Endothelial cell of umbilical vein (primary cell): ENCODE measurements at regions of chr21 and their contacts with region 1.

Region 1: GRCh38 chr21:32604464-32604863 is 7.7 kb downstream of the CFAP298 start:
- DNase-seq: no peak
- H3K4me3 ChIP-seq: no peak overlapping the region
- H3K27ac ChIP-seq: no peak overlapping the region
- H3K4me1 ChIP-seq: no peaks in the 10 kb centered on the region
- H3K27me3 ChIP-seq: no peaks in the 10 kb centered on the region
- CTCF ChIP-seq: no peak
- POLR2A ChIP-seq: no peak

Region 2: DNA sequence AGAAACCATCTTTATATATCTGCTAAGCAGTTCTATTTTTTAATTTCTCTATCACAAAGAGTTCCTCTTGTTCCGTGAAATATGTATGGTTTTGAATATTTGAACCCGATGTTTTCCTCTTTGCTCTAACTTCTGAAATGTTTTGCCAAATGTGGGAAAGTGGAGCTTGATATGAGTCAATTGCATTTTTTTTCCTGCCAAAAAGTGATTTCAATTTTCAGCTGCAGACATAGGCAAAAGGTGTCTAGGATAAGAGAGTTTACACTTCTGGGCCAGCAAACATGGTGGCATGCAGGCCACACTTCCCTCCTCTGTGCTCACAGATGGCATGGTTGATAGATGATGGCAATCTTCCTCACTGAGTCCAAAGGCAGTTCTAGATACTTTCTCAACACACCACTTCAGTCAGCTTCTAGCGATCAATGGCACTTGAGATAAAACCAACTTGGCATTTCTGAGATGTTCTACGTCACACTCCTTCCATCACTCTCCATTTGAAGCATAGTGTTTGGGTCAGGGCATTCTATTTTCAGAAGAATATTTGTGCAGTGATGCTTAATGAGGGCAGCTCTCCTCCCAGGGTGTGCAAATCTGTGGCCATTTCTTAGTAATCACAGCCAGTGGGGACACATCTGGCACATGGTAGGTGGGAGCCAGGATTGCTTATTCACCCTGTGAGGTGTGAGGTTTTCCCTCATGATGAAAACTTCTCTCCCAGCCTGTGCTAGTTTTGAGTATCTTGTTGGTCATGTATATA is 818.1 kb before region 1 on chr21:
- CTCF ChIA-PET with region 1: interaction called, 13 read pairs
- POLR2A ChIA-PET with region 1: no interaction called
- dilution Hi-C with region 1: no loop called
- intact Hi-C with region 1: loop called (anchors 5 kb)
- DNase-seq: no peak
- H3K4me3 ChIP-seq: no peak overlapping the region
- H3K27ac ChIP-seq: no peak overlapping the region
- H3K4me1 ChIP-seq: no peaks in the 10 kb centered on the region
- H3K27me3 ChIP-seq: no peaks in the 10 kb centered on the region
- CTCF ChIP-seq: no peak
- POLR2A ChIP-seq: no peak

Region 3: GRCh38 chr21:32096411-32096810 is 508.1 kb before region 1 on chr21:
- CTCF ChIA-PET with region 1: interaction called, 13 read pairs
- POLR2A ChIA-PET with region 1: no interaction called
- dilution Hi-C with region 1: no loop called
- intact Hi-C with region 1: no loop called
- DNase-seq: peak; percentile 17
- H3K4me3 ChIP-seq: no peak overlapping the region
- H3K27ac ChIP-seq: no peak overlapping the region
- H3K4me1 ChIP-seq: no peaks in the 10 kb centered on the region
- H3K27me3 ChIP-seq: no peaks in the 10 kb centered on the region
- CTCF ChIP-seq: peak; percentile 36 to 60
- POLR2A ChIP-seq: no peak

Region 4: DNA sequence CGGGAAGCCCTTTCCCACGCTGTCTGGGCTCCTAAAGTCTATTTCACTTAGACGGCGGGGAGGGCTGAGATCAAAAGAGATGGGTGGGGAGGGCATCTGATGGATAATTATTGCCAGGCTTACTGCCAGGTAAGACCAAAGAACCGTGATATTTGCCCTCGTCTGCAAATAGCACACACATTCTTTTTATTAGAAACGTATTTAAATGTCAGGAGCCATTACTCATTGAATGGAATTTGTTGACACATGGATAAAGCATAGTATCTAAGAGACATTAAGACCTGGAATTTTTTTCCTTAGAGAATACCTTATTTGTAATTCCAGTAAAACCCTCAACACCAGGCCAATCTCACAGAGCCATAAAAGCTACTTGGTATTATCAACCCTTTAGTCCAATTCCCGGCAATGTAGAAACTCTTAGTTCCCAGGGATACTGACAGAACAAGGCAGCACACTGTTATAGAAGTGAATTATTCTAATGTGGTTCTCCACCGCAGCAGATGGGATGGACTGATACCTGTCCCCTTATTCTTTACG is 222.3 kb before region 1 on chr21:
- CTCF ChIA-PET with region 1: interaction called, 12 read pairs
- POLR2A ChIA-PET with region 1: no interaction called
- dilution Hi-C with region 1: no loop called
- intact Hi-C with region 1: no loop called
- DNase-seq: no peak
- H3K4me3 ChIP-seq: no peak overlapping the region
- H3K27ac ChIP-seq: no peak overlapping the region
- H3K4me1 ChIP-seq: peaks cover 8% of the 10 kb centered on the region
- H3K27me3 ChIP-seq: no peaks in the 10 kb centered on the region
- CTCF ChIP-seq: no peak
- POLR2A ChIP-seq: no peak

Region 5: DNA sequence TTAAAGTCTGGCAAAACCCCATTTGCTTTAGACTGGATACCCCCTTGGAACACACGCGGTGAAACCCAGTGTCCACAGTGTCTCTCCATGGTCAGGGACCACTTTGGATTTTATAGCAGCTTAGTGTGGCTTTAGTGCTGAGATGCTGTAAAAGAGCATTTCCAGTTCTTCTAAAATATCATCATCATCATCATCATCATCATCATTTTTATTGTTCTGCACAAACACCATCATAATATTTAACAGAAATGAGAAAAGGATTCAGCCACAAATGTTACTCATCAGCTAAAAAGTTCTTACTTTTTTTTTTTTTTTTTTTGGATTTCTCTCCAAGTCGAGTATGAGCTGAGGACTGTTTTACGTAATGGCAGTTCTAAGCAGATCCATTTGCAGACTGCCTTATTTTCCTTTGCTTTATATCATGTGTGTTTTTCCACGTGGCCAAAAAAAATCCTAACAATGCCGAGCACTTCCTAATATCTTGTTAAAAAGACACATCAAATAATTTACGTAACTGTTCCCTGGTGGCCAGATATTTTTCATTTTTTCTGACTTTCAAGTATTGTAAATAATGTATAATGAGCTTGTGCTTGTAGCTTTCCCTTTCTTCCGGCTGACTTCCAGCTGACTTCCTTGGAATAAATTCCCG is 129.2 kb before region 1 on chr21:
- CTCF ChIA-PET with region 1: interaction called, 13 read pairs
- POLR2A ChIA-PET with region 1: no interaction called
- dilution Hi-C with region 1: no loop called
- intact Hi-C with region 1: no loop called
- DNase-seq: peak; percentile 86
- H3K4me3 ChIP-seq: peak overlapping the region in 1 of 3 experiments; percentile 36
- H3K27ac ChIP-seq: peak overlapping the region; percentile 66
- H3K4me1 ChIP-seq: peaks cover 46% of the 10 kb centered on the region
- H3K27me3 ChIP-seq: no peaks in the 10 kb centered on the region
- CTCF ChIP-seq: no peak
- POLR2A ChIP-seq: no peak

Region 6: GRCh38 chr21:32770871-32771523 is 166.5 kb after region 1 on chr21:
- CTCF ChIA-PET with region 1: no interaction called
- POLR2A ChIA-PET with region 1: no interaction called
- dilution Hi-C with region 1: no loop called
- intact Hi-C with region 1: no loop called
- DNase-seq: peak; percentile 53
- H3K4me3 ChIP-seq: peak overlapping the region; percentile 46 to 92 (median 78)
- H3K27ac ChIP-seq: peak overlapping the region; percentile 78
- H3K4me1 ChIP-seq: peaks cover 28% of the 10 kb centered on the region
- H3K27me3 ChIP-seq: no peaks in the 10 kb centered on the region
- CTCF ChIP-seq: no peak
- POLR2A ChIP-seq: no peak